RWPE1 (cell line): ENCODE measurements at regions of chr6 and their contacts with region 1.

Region 1: DNA sequence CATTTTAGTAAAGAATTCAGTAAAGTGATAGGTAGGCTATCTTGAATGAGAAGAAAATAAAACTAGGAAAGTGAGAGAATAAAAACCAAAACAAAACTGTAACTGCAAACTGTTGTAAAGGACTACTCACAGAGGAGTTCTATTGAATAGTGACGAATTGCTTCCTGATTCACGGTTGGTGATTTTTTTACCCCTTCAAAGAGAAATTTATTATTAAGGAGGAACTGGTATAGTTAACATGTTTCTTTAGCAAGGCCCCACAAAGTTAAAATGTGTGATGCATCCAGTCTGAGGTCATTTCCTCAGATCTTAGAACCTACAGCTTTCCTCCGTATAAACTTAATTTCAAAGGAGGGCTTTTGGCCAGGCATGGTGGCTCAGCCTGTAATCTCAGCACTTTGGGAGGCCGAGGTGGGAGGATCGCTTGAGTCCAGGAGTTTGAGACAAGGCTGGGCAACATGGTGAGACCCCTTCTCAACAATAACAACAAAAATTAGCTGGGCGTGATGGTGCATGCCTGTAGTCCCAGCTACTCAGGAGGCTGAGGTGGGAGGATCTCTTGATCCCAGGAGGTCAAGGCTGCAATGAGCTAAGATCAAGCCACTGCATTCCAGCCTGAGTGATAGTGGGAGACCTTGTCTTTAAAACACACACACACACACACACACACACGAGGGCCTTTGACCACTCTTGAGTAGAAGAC is 8.3 kb downstream of the PRDM1 start:
- DNase-seq: no peak
- H3K27ac ChIP-seq: no peak overlapping the region
- CTCF ChIP-seq: no peak

Region 2: DNA sequence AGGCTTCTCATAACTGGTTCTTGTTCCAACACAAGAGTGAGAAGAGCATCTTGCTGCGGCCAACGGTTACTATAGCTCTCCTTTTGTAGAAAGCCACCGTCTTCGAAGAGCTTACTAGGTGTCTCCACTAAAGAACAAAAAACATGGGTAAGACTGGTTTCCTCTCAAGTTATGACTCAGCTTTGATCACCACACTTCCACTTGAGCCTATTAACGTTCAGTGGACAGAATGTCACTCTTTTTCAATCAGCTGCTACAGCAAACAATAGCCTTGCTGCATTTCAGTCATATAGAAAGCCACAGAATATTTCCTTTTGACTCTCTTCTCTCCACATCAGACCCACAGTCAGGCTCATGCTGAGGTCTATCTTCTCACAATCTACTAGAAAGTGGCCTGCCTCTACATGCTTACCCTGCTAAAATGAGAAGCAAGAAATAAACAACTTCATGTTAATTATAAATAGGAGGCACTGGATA is 448.0 kb before region 1 on chr6:
- CTCF ChIA-PET with region 1: no interaction called
- POLR2A ChIA-PET with region 1: no interaction called
- DNase-seq: no peak
- H3K27ac ChIP-seq: no peak overlapping the region
- CTCF ChIP-seq: no peak

Region 3: GRCh38 chr6:106223300-106223930 is 129.0 kb after region 1 on chr6:
- CTCF ChIA-PET with region 1: interaction called, 22 read pairs
- POLR2A ChIA-PET with region 1: no interaction called
- DNase-seq: peak; percentile 29
- H3K27ac ChIP-seq: no peak overlapping the region
- CTCF ChIP-seq: peak; percentile 64